ENCODE measurements at regions of chr1 and their contacts with region 1.

Region 1: DNA sequence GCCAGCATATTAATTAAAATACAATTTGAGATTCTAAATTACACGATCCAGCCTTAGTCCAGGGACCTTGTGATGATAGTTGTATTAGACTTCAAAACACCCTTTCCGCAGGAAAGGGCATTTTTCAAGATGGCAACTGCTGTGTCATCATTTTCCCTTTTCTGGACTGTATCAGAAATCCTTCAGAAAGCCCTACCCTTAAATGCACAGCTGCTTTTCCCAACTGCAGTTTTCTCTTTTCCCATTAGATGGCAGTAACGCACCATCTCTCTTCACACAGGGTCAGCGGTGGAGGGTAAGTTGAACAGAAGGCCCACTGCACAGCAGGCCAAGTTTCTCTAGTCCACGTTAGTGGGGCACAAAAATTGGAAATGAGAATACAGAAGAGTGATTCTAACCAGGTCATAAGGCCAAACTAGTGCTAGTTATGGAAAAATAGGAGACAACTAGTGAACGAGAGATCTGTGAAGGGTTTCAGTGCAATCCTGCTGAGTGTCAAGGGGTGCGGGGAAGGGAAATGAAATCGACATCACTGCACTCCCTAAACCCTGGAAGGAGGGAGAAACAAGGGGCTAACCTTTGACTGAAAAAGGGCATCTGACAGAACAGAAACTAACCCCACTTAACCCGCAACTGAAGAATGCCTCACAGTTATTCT is 22.1 kb upstream of the TDRD10 start:
- DNase-seq: peak; percentile 82
- ATAC-seq: peak; percentile 89
- H3K4me3 ChIP-seq: no peak overlapping the region
- H3K4me3 Mint-ChIP-seq: no peak overlapping the region
- H3K27ac ChIP-seq: no peak overlapping the region
- H3K27ac Mint-ChIP-seq: no peak overlapping the region
- H3K4me1 ChIP-seq: no peaks in the 10 kb centered on the region
- H3K4me1 Mint-ChIP-seq: peaks cover 2% of the 10 kb centered on the region
- H3K27me3 ChIP-seq: no peaks in the 10 kb centered on the region
- H3K27me3 Mint-ChIP-seq: peaks cover 4% of the 10 kb centered on the region
- CTCF ChIP-seq: peak; percentile 99

Region 2: DNA sequence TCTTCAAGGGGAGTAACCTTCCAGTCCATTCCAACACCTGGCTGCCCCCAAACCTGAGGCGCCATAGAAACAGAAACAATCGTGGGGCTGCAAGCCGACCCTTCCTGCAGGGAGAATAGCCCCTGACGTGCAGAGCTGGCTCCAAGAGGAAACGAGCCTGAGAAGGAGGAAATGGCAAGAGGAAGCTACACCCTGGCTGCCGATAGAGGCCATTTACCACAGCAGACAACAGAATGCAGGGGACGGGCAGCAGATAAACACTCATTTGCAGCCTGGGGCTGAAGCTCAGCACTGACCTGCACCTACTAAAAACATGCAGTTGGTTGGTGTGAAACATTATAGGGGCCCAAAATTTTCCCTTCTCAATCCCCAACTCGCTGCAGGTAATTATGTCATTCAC is 13.4 kb after region 1 on chr1:
- CTCF ChIA-PET with region 1: interaction called, 46 read pairs
- POLR2A ChIA-PET with region 1: no interaction called
- intact Hi-C with region 1: no loop called
- DNase-seq: peak; percentile 68
- ATAC-seq: peak; percentile 61
- H3K4me3 ChIP-seq: peak overlapping the region in 1 of 5 experiments; percentile 39
- H3K4me3 Mint-ChIP-seq: peak overlapping the region; percentile 79
- H3K27ac ChIP-seq: peak overlapping the region in 1 of 2 donors; percentile 30
- H3K27ac Mint-ChIP-seq: peak overlapping the region; percentile 79
- H3K4me1 ChIP-seq: peaks cover 65 to 68% of the 10 kb centered on the region in 2 donors
- H3K4me1 Mint-ChIP-seq: peaks cover 60% of the 10 kb centered on the region
- H3K27me3 ChIP-seq: no peaks in the 10 kb centered on the region
- H3K27me3 Mint-ChIP-seq: no peaks in the 10 kb centered on the region
- CTCF ChIP-seq: no peak

Region 3: DNA sequence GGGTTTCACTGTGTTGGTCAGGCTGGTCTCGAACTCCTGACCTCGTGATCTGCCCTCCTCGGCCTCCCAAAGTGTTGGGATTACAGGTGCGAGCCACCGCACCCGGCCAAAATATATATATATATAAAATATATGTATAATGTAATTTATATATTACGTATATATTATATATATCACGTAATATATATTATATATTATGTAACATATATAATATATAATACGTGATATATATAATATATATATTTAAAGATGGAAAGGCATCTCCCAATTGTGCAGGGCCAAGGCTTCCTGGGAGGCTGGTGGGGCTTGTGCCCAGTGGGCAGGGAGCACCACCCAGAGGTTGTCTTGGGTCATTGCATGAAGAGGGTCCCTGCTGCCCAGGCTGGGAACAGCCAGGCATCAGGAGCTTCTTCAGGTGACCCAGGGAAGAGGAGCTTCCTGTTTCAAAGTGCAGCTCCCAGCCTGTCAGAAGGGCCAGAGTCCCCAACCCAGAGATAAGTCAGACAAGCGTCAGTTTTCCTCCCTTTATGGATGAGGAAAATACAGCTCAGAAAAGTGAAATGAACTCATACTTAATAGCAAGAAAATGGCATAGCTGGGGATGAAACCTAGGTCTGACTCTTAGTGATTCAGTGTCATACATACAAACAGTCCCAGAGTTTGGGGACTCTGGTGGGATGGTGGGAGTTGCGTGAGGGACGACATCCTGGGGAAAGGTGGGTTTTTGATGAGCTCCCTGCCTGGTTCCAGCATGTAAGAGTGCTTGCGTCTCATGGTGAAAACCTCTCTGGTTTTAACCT is 66.6 kb after region 1 on chr1:
- CTCF ChIA-PET with region 1: interaction called, 188 read pairs
- POLR2A ChIA-PET with region 1: no interaction called
- intact Hi-C with region 1: no loop called
- DNase-seq: peak; percentile 69
- ATAC-seq: peak; percentile 86
- H3K4me3 ChIP-seq: no peak overlapping the region
- H3K4me3 Mint-ChIP-seq: no peak overlapping the region
- H3K27ac ChIP-seq: no peak overlapping the region
- H3K27ac Mint-ChIP-seq: no peak overlapping the region
- H3K4me1 ChIP-seq: no peaks in the 10 kb centered on the region
- H3K4me1 Mint-ChIP-seq: peaks cover 5% of the 10 kb centered on the region
- H3K27me3 ChIP-seq: peaks cover 0 to 4% (median 0%) of the 10 kb centered on the region in 4 experiments
- H3K27me3 Mint-ChIP-seq: peaks cover 15% of the 10 kb centered on the region
- CTCF ChIP-seq: peak; percentile 83

Region 4: GRCh38 chr1:154760469-154760933 is 280.6 kb after region 1 on chr1:
- CTCF ChIA-PET with region 1: interaction called, 56 read pairs
- POLR2A ChIA-PET with region 1: no interaction called
- intact Hi-C with region 1: loop called (anchors 1 kb)
- DNase-seq: peak; percentile 85
- ATAC-seq: peak; percentile 95
- H3K4me3 ChIP-seq: peak overlapping the region in 3 of 5 experiments; percentile 28 to 35 (median 31)
- H3K4me3 Mint-ChIP-seq: no peak overlapping the region
- H3K27ac ChIP-seq: no peak overlapping the region
- H3K27ac Mint-ChIP-seq: no peak overlapping the region
- H3K4me1 ChIP-seq: peaks cover 3 to 9% of the 10 kb centered on the region in 2 donors
- H3K4me1 Mint-ChIP-seq: no peaks in the 10 kb centered on the region
- H3K27me3 ChIP-seq: peaks cover 0 to 28% (median 7%) of the 10 kb centered on the region in 4 experiments
- H3K27me3 Mint-ChIP-seq: peaks cover 41% of the 10 kb centered on the region
- CTCF ChIP-seq: peak; percentile 90

Region 5: GRCh38 chr1:154974063-154974807 is 494.3 kb after region 1 on chr1 and contains the start of gene CKS1B:
- CTCF ChIA-PET with region 1: no interaction called
- POLR2A ChIA-PET with region 1: interaction called, 16 read pairs
- intact Hi-C with region 1: no loop called
- DNase-seq: peak; percentile 100
- ATAC-seq: peak; percentile 80
- H3K4me3 ChIP-seq: peak within 1 kb of the TSS; percentile 71 to 99 (median 90)
- H3K4me3 Mint-ChIP-seq: no peak within 1 kb of the TSS
- H3K27ac ChIP-seq: peak within 1 kb of the TSS; percentile 90 to 94
- H3K27ac Mint-ChIP-seq: no peak within 1 kb of the TSS
- H3K4me1 ChIP-seq: peaks cover 22 to 44% of the 10 kb centered on the region in 2 donors
- H3K4me1 Mint-ChIP-seq: peaks cover 29% of the 10 kb centered on the region
- H3K27me3 ChIP-seq: no peaks in the 10 kb centered on the region
- H3K27me3 Mint-ChIP-seq: no peaks in the 10 kb centered on the region
- CTCF ChIP-seq: no peak
- total RNA-seq, gene CKS1B: 16.8 and 17.5 TPM in 2 replicates

Measured in B cell (primary cell).